ENCODE measurements at regions of chr13 and their contacts with region 1.

Region 1: DNA sequence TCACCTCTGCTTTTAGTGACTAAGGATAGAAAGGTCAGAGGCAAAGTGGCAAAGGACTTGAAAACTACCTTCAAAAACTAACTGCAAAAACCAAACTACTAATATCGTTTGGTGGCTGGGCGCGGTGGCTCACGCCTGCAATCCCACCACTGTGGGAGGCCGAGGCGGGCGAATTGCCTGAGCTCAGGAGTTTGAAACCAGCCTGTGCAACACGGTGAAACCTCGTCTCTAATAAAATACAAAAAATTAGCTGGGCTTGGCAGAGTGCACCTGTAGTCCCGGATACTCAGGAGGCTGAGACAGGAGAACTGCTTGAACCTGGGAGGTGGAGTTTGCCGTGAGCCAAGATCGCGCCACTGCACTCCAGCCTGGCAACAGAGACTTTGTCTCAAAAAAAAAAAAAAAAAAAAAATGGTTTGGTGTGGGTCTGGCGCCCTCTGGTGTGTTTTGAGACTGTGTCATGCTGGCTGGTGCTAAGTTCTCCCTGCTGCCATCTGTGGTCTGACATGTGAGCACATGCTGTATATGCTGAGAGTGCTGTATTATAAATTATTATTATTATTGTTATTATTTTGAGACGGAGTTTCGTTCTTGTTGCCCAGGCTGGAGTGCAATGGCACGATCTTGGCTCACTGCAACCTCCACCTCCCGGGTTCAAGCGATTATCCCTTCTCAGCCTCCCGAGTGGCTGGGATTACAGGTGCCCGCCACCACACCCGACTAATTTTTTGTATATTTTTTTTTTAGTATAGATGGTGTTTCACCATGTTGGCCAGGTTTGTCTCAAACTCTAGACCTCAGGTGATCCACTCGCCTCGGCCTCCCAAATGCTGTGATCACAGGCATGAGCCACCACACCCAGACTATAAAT is 36.0 kb upstream of the RNF17 start:
- DNase-seq: peak; percentile 73
- H3K4me3 ChIP-seq: no peak overlapping the region
- H3K27ac ChIP-seq: no peak overlapping the region
- H3K4me1 ChIP-seq: no peaks in the 10 kb centered on the region
- H3K27me3 ChIP-seq: no peaks in the 10 kb centered on the region
- CTCF ChIP-seq: peak; percentile 87 to 88

Region 2: DNA sequence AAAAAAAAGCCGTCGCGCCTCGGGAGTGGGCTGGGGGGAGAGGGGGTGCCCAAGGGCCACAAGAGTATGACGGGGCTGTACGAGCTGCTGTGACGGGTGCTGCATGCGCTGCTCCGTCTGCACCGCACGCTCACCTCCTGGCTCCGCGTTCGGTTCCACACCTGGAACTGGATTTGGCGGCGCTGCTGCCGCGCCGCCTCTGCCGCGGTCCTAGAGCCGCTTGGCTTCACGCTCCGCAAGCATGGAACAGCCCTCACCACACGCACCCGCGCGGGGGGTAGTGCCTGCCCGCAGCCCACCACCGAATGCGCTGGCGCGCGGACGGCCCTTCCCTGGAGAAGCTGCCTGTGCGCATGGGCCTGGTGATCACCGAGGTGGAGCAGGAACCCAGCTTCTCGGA is 399.8 kb before region 1 on chr13:
- CTCF ChIA-PET with region 1: no interaction called
- dilution Hi-C with region 1: no loop called
- in situ Hi-C with region 1: loop called in 1 of 2 experiments (anchors 25 kb)
- intact Hi-C with region 1: loop called (anchors 2 kb)
- DNase-seq: no peak
- H3K4me3 ChIP-seq: no peak overlapping the region
- H3K27ac ChIP-seq: no peak overlapping the region
- H3K4me1 ChIP-seq: no peaks in the 10 kb centered on the region
- H3K27me3 ChIP-seq: no peaks in the 10 kb centered on the region
- CTCF ChIP-seq: no peak

Region 3: DNA sequence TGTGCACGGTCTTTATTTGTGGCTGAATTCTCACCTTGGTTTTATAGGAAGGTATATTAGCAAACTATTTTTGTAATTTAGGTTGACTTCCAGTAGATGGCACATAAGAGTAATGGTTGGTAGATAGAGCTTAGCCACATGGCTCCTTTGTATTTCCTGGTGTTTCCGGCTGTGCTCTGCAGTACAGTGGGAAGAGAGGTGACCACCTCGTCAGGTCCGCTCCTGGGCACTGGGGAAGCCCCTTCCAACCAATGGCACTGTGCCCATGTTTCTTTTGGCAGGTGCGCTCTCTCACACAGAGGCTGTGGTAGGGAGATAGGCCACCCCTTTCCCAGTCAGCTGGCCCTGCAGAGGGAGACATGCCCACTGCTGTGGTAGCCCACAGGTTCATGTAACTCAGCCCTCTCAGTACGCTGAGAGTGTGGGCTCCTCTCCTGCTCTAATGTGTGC is 122.0 kb before region 1 on chr13:
- CTCF ChIA-PET with region 1: no interaction called
- dilution Hi-C with region 1: no loop called
- in situ Hi-C with region 1: loop called (anchors 10 kb)
- intact Hi-C with region 1: loop called (anchors 1 kb)
- DNase-seq: peak; percentile 36
- H3K4me3 ChIP-seq: no peak overlapping the region
- H3K27ac ChIP-seq: no peak overlapping the region
- H3K4me1 ChIP-seq: peaks cover 7% of the 10 kb centered on the region
- H3K27me3 ChIP-seq: no peaks in the 10 kb centered on the region
- CTCF ChIP-seq: peak; percentile 47 to 61

Region 4: GRCh38 chr13:24671386-24672107 is 56.4 kb before region 1 on chr13:
- CTCF ChIA-PET with region 1: no interaction called
- dilution Hi-C with region 1: no loop called
- in situ Hi-C with region 1: no loop called
- intact Hi-C with region 1: loop called (anchors 1 kb)
- DNase-seq: peak; percentile 87
- H3K4me3 ChIP-seq: peak overlapping the region in 1 of 3 experiments; percentile 1
- H3K27ac ChIP-seq: peak overlapping the region; percentile 99
- H3K4me1 ChIP-seq: peaks cover 44% of the 10 kb centered on the region
- H3K27me3 ChIP-seq: no peaks in the 10 kb centered on the region
- CTCF ChIP-seq: peak; percentile 61 to 83

Region 5: GRCh38 chr13:24693862-24694471 is 34.0 kb before region 1 on chr13:
- CTCF ChIA-PET with region 1: no interaction called
- dilution Hi-C with region 1: no loop called
- in situ Hi-C with region 1: no loop called
- intact Hi-C with region 1: loop called (anchors 2 kb)
- DNase-seq: peak; percentile 47
- H3K4me3 ChIP-seq: no peak overlapping the region
- H3K27ac ChIP-seq: no peak overlapping the region
- H3K4me1 ChIP-seq: no peaks in the 10 kb centered on the region
- H3K27me3 ChIP-seq: no peaks in the 10 kb centered on the region
- CTCF ChIP-seq: peak; percentile 68 to 83